Endothelial cell of umbilical vein (primary cell): ENCODE measurements at regions of chr12 and their contacts with region 1.

Region 1: GRCh38 chr12:56104109-56104814 is at the start of gene PA2G4:
- DNase-seq: peak; percentile 99
- H3K4me3 ChIP-seq: peak within 1 kb of the TSS; percentile 49 to 85 (median 68)
- H3K27ac ChIP-seq: peak within 1 kb of the TSS; percentile 60
- H3K4me1 ChIP-seq: peaks cover 25% of the 10 kb centered on the region
- H3K27me3 ChIP-seq: peaks cover 0 to 6% of the 10 kb centered on the region in 2 experiments
- CTCF ChIP-seq: no peak
- POLR2A ChIP-seq: peak; percentile 96
- total RNA-seq, gene PA2G4: 170 and 188 TPM in 2 replicates

Region 2: GRCh38 chr12:55392032-55392795 is 712.0 kb before region 1 on chr12:
- CTCF ChIA-PET with region 1: no interaction called
- POLR2A ChIA-PET with region 1: no interaction called
- dilution Hi-C with region 1: no loop called
- intact Hi-C with region 1: no loop called
- DNase-seq: no peak
- H3K4me3 ChIP-seq: no peak overlapping the region
- H3K27ac ChIP-seq: no peak overlapping the region
- H3K4me1 ChIP-seq: no peaks in the 10 kb centered on the region
- H3K27me3 ChIP-seq: no peaks in the 10 kb centered on the region
- CTCF ChIP-seq: no peak
- POLR2A ChIP-seq: no peak

Region 3: DNA sequence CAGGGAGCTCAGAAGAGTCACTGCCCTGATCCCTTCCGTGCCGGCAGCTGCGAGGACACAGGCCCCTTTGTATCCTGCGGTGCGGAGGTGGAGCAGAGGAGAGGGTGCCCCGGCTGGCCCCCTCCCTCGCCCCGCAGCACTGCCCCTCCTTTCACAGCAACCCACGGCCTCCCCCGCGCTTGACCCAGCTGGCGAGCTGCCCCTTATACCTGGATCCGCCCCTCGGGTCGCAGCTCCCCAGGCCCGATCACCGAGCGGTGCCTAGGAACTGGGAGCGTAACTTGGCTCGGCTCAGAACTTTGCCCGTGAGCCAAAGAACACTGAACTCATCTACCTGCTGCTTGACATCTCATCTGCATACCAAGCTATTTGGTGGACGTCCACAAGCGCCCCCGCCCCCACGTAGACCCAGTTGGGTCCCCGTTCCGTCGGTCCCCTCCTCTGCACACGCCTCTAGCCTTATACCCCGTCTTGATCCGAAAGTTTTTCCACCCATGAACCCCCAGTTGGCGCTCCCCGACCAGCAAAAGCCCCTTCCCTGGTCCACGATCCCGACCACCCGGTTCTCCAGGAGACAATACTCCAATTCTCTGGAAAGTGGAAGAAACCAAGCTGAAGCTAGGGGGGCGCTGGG is 274.2 kb before region 1 on chr12:
- CTCF ChIA-PET with region 1: no interaction called
- POLR2A ChIA-PET with region 1: interaction called, 5 read pairs
- dilution Hi-C with region 1: no loop called
- intact Hi-C with region 1: loop called (anchors 1 kb)
- DNase-seq: peak; percentile 70
- H3K4me3 ChIP-seq: peak overlapping the region; percentile 81 to 92 (median 82)
- H3K27ac ChIP-seq: peak overlapping the region; percentile 60
- H3K4me1 ChIP-seq: peaks cover 27% of the 10 kb centered on the region
- H3K27me3 ChIP-seq: no peaks in the 10 kb centered on the region
- CTCF ChIP-seq: no peak
- POLR2A ChIP-seq: no peak

Region 4: DNA sequence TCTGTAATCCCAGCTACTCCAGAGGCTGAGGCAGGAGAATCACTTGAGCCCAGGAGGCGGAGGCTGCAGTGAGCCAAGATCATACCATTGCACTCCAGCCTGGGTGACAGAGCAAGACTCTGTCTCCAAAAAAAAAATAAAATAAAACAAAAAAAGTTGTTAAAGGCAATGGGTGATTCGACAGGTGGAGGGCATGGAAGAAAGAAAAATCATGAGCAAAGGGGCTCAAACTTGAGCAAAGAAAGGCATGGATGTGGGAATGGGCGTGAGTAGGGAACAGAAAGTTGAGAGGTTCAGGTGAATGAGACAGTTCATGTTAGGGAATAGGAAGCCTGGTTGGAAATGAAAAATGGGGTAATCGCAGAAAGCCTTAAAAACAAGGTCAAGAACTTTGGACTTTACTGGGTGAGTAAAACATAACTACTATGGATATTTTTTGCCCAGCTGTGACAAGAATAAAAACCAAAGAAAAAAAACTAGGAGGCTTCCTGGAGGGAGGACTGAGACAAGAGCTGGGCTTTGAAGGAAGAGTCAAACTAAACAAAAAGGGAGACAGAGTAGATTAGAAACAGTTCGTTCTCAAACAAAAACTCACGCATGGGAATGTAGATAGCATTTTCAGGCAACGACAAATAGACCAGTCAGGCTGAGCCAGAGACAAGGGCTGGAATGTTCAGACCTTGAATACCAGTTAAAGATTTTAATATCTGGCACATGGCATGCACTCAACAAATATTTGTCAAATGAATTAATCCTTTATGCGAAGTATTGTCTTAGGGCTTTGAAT is 195.3 kb before region 1 on chr12:
- CTCF ChIA-PET with region 1: no interaction called
- POLR2A ChIA-PET with region 1: no interaction called
- dilution Hi-C with region 1: no loop called
- intact Hi-C with region 1: no loop called
- DNase-seq: no peak
- H3K4me3 ChIP-seq: no peak overlapping the region
- H3K27ac ChIP-seq: no peak overlapping the region
- H3K4me1 ChIP-seq: no peaks in the 10 kb centered on the region
- H3K27me3 ChIP-seq: no peaks in the 10 kb centered on the region
- CTCF ChIP-seq: no peak
- POLR2A ChIP-seq: no peak

Region 5: GRCh38 chr12:56041552-56042429 is 62.5 kb before region 1 on chr12 and contains the start of gene RPS26:
- CTCF ChIA-PET with region 1: interaction called, 18 read pairs
- POLR2A ChIA-PET with region 1: interaction called, 4 read pairs
- dilution Hi-C with region 1: no loop called
- intact Hi-C with region 1: no loop called
- DNase-seq: peak; percentile 100
- H3K4me3 ChIP-seq: peak within 1 kb of the TSS; percentile 84 to 100 (median 87)
- H3K27ac ChIP-seq: peak within 1 kb of the TSS; percentile 95
- H3K4me1 ChIP-seq: peaks cover 17% of the 10 kb centered on the region
- H3K27me3 ChIP-seq: no peaks in the 10 kb centered on the region
- CTCF ChIP-seq: peak in 1 of 2 donors; percentile 46
- POLR2A ChIP-seq: peak; percentile 99
- total RNA-seq, gene RPS26: 57.3 and 66.7 TPM in 2 replicates

Region 6: DNA sequence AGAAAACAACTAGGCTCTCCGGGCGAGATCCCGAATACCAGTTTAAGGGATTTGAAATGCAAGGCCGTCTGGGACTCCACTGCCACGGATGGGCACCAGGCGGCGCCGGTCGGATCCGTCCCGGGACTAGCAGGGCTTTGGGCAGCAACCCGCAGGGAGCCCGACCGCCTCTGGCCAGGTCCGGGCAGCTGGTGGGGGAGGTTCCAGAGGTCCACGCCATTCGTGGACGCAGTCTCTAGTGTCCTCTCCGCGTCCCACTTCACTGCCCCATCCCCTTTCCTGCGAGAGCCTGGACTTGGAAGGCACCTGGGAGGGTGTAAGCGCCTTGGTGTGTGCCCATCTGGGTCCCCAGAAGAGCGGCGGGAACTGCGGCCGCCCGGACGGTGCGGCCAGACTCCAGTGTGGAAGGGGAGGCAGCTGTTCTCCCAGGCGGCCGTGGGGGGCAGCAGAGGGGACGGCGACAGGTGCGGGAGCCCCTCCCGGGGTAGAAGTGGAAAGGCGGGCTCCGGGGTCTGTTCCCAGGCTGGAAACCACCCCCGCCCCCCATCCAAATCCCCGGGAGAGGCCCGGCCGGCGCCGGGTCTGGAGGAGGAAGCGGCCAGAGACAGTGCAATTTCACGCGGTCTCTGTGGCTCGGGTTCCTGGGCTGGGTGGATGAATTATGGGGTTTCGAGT is 25.1 kb before region 1 on chr12:
- CTCF ChIA-PET with region 1: interaction called, 59 read pairs
- POLR2A ChIA-PET with region 1: interaction called, 3 read pairs
- dilution Hi-C with region 1: no loop called
- intact Hi-C with region 1: loop called (anchors 1 kb)
- DNase-seq: peak; percentile 93
- H3K4me3 ChIP-seq: peak overlapping the region; percentile 31 to 58 (median 36)
- H3K27ac ChIP-seq: no peak overlapping the region
- H3K4me1 ChIP-seq: peaks cover 8% of the 10 kb centered on the region
- H3K27me3 ChIP-seq: peaks cover 2 to 4% of the 10 kb centered on the region in 2 experiments
- CTCF ChIP-seq: peak; percentile 81 to 82
- POLR2A ChIP-seq: no peak

Region 7: GRCh38 chr12:56084958-56085543 is 19.2 kb before region 1 on chr12:
- CTCF ChIA-PET with region 1: interaction called, 59 read pairs
- POLR2A ChIA-PET with region 1: interaction called, 5 read pairs
- dilution Hi-C with region 1: no loop called
- intact Hi-C with region 1: no loop called
- DNase-seq: peak; percentile 20
- H3K4me3 ChIP-seq: no peak overlapping the region
- H3K27ac ChIP-seq: no peak overlapping the region
- H3K4me1 ChIP-seq: peaks cover 16% of the 10 kb centered on the region
- H3K27me3 ChIP-seq: peaks cover 4 to 8% of the 10 kb centered on the region in 2 experiments
- CTCF ChIP-seq: peak; percentile 40 to 58
- POLR2A ChIP-seq: no peak

Region 8: DNA sequence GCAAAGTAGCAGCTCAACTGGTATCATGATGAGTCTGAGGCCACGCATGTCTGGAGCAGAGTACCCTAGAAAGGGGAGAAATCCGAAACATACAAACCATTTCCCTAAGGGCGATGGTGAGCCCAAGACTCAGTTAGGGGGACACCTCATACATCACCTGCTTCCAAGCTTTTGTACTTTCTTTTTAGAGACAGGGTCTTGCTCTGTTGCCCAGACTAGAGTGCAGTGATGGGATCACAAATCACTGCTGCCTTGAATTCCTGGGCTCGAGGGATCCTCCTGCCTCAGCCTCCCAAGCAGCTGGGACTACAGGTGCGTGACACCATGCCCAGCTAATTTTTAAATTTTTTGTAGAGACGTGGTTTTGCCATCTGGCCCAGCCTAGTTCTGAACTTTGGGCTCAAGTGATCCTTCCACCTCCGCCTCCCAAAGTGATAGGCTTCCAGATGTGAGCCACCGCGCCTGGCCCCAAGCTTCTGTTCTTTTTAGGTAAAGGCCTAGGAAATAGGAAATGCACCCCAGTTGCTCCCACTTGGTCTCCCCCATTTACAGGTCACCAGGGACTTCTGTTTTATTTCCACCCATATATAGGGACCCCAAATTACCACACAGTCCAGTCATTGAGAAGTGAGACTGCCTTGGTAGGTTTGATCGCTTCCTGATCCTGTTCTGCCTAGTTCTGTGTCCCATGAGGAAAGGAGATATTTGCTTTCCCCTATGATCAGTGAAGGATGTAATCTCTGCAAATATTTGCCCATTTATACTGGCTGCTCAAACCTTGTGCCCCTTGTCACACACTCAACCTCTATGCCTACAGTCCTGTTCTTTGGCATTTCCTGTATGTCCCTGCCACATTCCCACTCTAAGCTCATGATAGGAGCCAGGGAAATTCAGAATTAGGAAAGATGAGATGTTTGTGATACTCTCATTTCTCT is 258.1 kb after region 1 on chr12 and contains the start of gene APOF:
- CTCF ChIA-PET with region 1: no interaction called
- POLR2A ChIA-PET with region 1: no interaction called
- dilution Hi-C with region 1: no loop called
- intact Hi-C with region 1: no loop called
- DNase-seq: no peak
- H3K4me3 ChIP-seq: no peak within 1 kb of the TSS
- H3K27ac ChIP-seq: no peak within 1 kb of the TSS
- H3K4me1 ChIP-seq: peaks cover 14% of the 10 kb centered on the region
- H3K27me3 ChIP-seq: no peaks in the 10 kb centered on the region
- CTCF ChIP-seq: no peak
- POLR2A ChIP-seq: no peak
- total RNA-seq, gene APOF: not detected in 2 replicates